ENCODE measurements at regions of chr4 and their contacts with region 1.

Region 1: GRCh38 chr4:16807355-16807754 is 91.1 kb downstream of the LDB2 start:
- DNase-seq: no peak
- H3K4me3 ChIP-seq: no peak overlapping the region
- H3K27ac ChIP-seq: no peak overlapping the region
- H3K4me1 ChIP-seq: no peaks in the 10 kb centered on the region
- H3K27me3 ChIP-seq: no peaks in the 10 kb centered on the region
- CTCF ChIP-seq: no peak
- EP300 ChIP-seq: no peak
- POLR2A ChIP-seq: no peak

Region 2: DNA sequence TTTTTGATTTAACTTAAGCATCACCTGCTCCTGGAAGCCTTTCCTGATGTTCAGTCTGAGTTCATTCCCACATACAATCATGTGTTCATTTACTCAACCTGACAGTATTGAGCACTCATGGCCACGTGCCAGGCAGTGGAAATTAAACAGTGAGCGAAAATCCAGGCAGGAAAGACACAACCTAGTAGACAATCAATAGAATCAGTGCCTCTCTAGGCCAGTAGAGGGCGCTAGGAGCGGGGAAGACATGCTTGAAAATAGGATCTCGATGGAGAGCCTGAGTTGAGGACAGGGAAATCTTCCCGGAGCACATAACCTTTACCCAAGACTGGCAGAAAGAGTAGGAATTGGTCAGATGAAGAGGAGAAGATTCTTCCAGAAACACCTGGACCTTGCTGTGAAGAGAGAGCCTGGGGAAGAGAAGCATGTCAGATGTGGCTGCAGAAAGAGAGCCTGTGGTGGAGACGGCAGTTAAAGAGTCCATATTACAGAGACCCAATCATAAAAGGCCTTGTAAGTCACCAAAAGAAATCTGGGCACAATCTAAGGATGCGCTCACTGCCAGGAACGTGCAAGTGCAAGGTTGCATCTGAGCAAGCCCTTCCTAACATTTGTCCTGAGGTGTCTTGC is 12.4 kb before region 1 on chr4:
- intact Hi-C with region 1: loop called (anchors 1 kb)
- DNase-seq: no peak
- H3K4me3 ChIP-seq: no peak overlapping the region
- H3K27ac ChIP-seq: no peak overlapping the region
- H3K4me1 ChIP-seq: no peaks in the 10 kb centered on the region
- H3K27me3 ChIP-seq: no peaks in the 10 kb centered on the region
- CTCF ChIP-seq: peak in 1 of 4 experiments; percentile 50
- EP300 ChIP-seq: no peak
- POLR2A ChIP-seq: no peak

Region 3: DNA sequence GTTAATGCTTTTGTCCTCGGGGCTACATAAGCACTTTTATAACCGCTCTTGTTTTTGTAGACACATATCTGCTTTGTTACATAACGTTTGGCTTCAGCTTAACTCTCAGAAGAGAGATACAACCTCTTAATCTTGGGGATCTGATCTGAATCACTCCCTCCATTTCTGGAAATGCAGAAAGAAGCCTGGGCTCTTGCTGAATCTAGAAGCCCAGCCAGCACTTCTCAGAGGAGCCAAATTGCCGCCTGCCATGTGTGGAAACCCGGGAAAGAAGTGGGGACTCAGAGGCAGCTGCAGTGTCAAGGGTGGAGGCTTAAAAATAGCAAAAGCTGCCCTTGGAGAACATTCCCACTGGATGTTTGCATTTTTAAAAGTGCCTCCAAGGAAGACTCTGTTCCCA is 160.4 kb after region 1 on chr4:
- intact Hi-C with region 1: no loop called
- DNase-seq: peak; percentile 87
- H3K4me3 ChIP-seq: no peak overlapping the region
- H3K27ac ChIP-seq: peak overlapping the region in 3 of 4 donors; percentile 45 to 74 (median 56)
- H3K4me1 ChIP-seq: peaks cover 0 to 30% (median 29%) of the 10 kb centered on the region in 4 donors
- H3K27me3 ChIP-seq: no peaks in the 10 kb centered on the region
- CTCF ChIP-seq: no peak
- EP300 ChIP-seq: no peak
- POLR2A ChIP-seq: no peak

Region 4: GRCh38 chr4:17414392-17414791 is 607.0 kb after region 1 on chr4:
- intact Hi-C with region 1: no loop called
- DNase-seq: no peak
- H3K4me3 ChIP-seq: no peak overlapping the region
- H3K27ac ChIP-seq: no peak overlapping the region
- H3K4me1 ChIP-seq: no peaks in the 10 kb centered on the region
- H3K27me3 ChIP-seq: no peaks in the 10 kb centered on the region
- CTCF ChIP-seq: no peak
- EP300 ChIP-seq: no peak
- POLR2A ChIP-seq: no peak

Measured in sigmoid colon (tissue), 7 donors.